Esophagus muscularis mucosa (tissue), 4 donors: ENCODE measurements at regions of chr13 and their contacts with region 1.

Region 1: GRCh38 chr13:112443995-112444860 is 68.1 kb downstream of the SPACA7 start:
- DNase-seq: peak; percentile 91
- H3K4me3 ChIP-seq: no peak overlapping the region
- H3K27ac ChIP-seq: no peak overlapping the region
- H3K4me1 ChIP-seq: peaks cover 0 to 15% (median 4%) of the 10 kb centered on the region in 4 donors
- H3K27me3 ChIP-seq: peaks cover 0 to 97% (median 22%) of the 10 kb centered on the region in 4 donors
- CTCF ChIP-seq: peak; percentile 80 to 83 (median 82)
- EP300 ChIP-seq: no peak
- POLR2A ChIP-seq: no peak

Region 2: DNA sequence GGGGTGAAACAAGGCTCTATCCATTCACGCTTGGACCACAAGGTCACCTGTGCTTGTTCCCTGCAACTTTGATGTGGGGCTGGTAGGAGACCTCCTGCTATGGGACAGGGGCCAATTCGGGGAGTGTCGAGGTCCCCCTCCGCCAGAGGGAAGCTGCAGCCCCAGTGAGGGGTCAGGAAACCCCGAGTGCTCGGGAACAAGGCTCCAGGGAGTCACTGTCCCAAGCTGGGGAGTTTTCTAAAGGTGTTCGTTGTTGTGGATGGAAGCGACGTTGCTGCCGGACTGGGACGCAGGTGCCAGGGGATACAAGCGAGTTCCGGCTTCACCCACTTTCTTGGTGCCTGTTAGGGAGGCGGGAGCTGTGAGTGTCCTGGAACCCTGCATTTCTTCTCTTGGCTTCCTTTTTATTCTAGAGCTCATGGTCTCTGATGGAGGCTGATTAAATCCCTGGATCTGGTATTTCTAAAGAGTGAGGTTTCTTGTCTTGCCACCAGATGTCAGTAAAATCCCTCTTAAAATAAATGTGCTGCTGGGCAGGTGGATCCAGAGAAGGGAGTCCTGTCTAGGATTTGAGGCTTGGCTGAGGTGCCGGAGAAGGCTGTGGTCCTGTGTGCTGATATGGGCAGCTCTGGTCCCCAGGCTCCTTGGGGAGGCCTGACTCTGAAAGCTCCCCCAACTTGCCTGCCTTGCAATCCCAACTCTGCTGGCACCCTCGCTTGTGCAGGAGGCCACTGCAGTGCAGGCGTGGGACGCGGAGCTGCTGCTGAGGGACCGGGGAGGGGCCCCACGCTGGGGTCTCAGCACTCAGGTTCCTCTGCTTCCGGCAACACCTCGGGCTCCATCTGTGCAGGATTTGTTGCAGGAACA is 969.9 kb before region 1 on chr13:
- intact Hi-C with region 1: loop called (anchors 1 kb)
- DNase-seq: no peak
- H3K4me3 ChIP-seq: no peak overlapping the region
- H3K27ac ChIP-seq: no peak overlapping the region
- H3K4me1 ChIP-seq: no peaks in the 10 kb centered on the region
- H3K27me3 ChIP-seq: peaks cover 0 to 47% (median 0%) of the 10 kb centered on the region in 4 donors
- CTCF ChIP-seq: peak; percentile 44 to 59 (median 54)
- EP300 ChIP-seq: no peak
- POLR2A ChIP-seq: no peak

Region 3: GRCh38 chr13:112575675-112576074 is 131.4 kb after region 1 on chr13:
- intact Hi-C with region 1: no loop called
- DNase-seq: peak; percentile 77
- H3K4me3 ChIP-seq: peak overlapping the region in 3 of 4 donors; percentile 6 to 11 (median 8)
- H3K27ac ChIP-seq: peak overlapping the region; percentile 36 to 81 (median 55)
- H3K4me1 ChIP-seq: peaks cover 22 to 58% (median 44%) of the 10 kb centered on the region in 4 donors
- H3K27me3 ChIP-seq: no peaks in the 10 kb centered on the region
- CTCF ChIP-seq: peak in 1 of 3 experiments; percentile 27
- EP300 ChIP-seq: no peak
- POLR2A ChIP-seq: no peak

Region 4: DNA sequence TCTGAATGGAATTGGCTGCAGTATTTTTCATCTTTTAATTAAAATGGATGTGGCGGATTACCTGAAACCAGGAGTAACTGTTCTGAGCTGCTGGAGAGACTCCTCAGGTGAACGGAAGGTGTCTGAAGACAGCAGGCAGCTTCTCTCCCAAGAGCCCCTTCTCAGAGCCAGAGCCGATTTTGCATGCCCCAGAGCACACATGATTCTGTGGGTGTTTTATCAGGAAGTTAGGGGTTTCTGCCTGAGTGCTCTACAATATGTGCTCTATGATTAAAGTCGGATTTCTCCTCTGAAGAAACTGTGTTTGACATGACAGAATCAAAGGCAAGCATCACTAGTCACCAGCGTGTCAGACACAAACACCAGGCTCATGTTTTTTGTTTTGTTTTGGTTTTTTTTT is 464.1 kb after region 1 on chr13:
- intact Hi-C with region 1: no loop called
- DNase-seq: no peak
- H3K4me3 ChIP-seq: no peak overlapping the region
- H3K27ac ChIP-seq: no peak overlapping the region
- H3K4me1 ChIP-seq: no peaks in the 10 kb centered on the region
- H3K27me3 ChIP-seq: peaks cover 0 to 57% (median 0%) of the 10 kb centered on the region in 4 donors
- CTCF ChIP-seq: no peak
- EP300 ChIP-seq: no peak
- POLR2A ChIP-seq: no peak